Ovary (tissue), 10 donors: ENCODE measurements at regions of chr5 and their contacts with region 1.

Region 1: GRCh38 chr5:115770466-115770865 is 46.0 kb downstream of the CDO1 start:
- DNase-seq: no peak
- H3K4me3 ChIP-seq: no peak overlapping the region
- H3K27ac ChIP-seq: no peak overlapping the region
- H3K4me1 ChIP-seq: peaks cover 4% of the 10 kb centered on the region
- H3K27me3 ChIP-seq: no peaks in the 10 kb centered on the region
- CTCF ChIP-seq: no peak
- EP300 ChIP-seq: no peak
- POLR2A ChIP-seq: no peak

Region 2: GRCh38 chr5:115795697-115796096 is 25.2 kb after region 1 on chr5:
- intact Hi-C with region 1: loop called in 1 of 4 experiments (anchors 2 kb)
- DNase-seq: no peak
- H3K4me3 ChIP-seq: no peak overlapping the region
- H3K27ac ChIP-seq: no peak overlapping the region
- H3K4me1 ChIP-seq: no peaks in the 10 kb centered on the region
- H3K27me3 ChIP-seq: no peaks in the 10 kb centered on the region
- CTCF ChIP-seq: no peak
- EP300 ChIP-seq: no peak
- POLR2A ChIP-seq: no peak